Heart right ventricle (tissue), 16 donors: ENCODE measurements at regions of chr2 and their contacts with region 1.

Region 1: GRCh38 chr2:112645310-112646101 is at the start of gene SLC20A1:
- DNase-seq: peak; percentile 93 to 98
- ATAC-seq: peak; percentile 97 to 99 (median 98)
- H3K4me3 ChIP-seq: peak within 1 kb of the TSS; percentile 71 to 98 (median 88)
- H3K27ac ChIP-seq: peak within 1 kb of the TSS; percentile 94 to 99 (median 98)
- H3K4me1 ChIP-seq: peaks cover 4 to 84% (median 44%) of the 10 kb centered on the region in 9 donors
- H3K27me3 ChIP-seq: no peaks in the 10 kb centered on the region
- CTCF ChIP-seq: peak in 8 of 9 donors; percentile 37 to 63 (median 42)
- total RNA-seq, gene SLC20A1: 10.8 to 21.3 (median 13.2) TPM

Region 2: DNA sequence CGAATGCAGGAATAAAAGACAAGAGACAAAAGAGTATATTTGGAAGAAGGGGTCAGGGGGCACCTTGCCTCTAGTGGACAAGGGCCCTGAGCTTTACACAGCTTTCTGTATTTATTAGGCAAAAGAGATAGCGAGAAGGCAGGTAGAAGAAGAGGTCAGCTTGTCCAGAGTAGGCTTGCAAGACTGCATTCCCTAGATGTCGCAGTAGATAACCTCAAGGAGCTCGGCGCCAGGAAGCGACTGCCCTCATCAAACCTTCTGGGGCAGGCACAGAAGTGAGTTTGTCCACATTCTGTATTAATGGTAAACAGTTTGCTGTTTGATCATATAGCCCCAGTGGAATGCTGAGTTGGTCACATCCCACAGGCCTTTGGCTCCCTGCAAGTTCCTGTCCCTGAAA is 54.1 kb before region 1 on chr2:
- intact Hi-C with region 1: no loop called
- DNase-seq: no peak
- ATAC-seq: no peak
- H3K4me3 ChIP-seq: no peak overlapping the region
- H3K27ac ChIP-seq: no peak overlapping the region
- H3K4me1 ChIP-seq: peaks cover 0 to 8% (median 0%) of the 10 kb centered on the region in 9 donors
- H3K27me3 ChIP-seq: no peaks in the 10 kb centered on the region
- CTCF ChIP-seq: no peak

Region 3: DNA sequence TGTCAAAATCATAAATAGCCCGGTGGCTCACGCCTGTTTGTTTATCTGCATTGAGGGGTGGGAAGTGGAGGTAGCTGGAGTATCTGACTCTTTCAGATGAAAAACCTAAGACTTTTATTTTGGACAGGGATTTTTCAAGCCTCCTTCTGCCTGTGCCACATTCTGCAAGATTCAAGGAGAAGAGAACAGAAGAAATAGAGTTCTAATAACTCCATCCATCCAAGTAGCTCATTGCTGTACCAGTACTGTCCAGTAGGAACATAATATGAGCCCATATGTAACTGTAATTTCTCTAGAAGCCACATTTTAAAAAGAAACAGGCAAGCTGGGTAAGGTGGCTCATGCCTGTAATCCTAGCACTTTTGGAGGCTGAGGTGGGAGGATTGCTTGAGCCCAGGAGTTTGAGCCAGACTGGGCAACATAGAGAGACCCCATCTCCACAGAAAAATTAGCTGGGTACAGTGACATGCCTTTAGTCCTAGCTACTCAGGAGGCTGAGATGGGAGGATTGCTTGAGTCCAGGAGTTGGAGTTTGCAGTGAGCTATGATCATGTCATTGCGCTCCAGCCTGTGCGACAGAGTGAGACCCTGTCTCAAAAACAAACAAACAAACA is 39.9 kb after region 1 on chr2:
- intact Hi-C with region 1: loop called in 1 of 10 experiments (anchors 5 kb)
- DNase-seq: no peak
- ATAC-seq: no peak
- H3K4me3 ChIP-seq: no peak overlapping the region
- H3K27ac ChIP-seq: no peak overlapping the region
- H3K4me1 ChIP-seq: peaks cover 0 to 43% (median 0%) of the 10 kb centered on the region in 9 donors
- H3K27me3 ChIP-seq: no peaks in the 10 kb centered on the region
- CTCF ChIP-seq: no peak